ENCODE measurements at regions of chr12 and their contacts with region 1.

Region 1: DNA sequence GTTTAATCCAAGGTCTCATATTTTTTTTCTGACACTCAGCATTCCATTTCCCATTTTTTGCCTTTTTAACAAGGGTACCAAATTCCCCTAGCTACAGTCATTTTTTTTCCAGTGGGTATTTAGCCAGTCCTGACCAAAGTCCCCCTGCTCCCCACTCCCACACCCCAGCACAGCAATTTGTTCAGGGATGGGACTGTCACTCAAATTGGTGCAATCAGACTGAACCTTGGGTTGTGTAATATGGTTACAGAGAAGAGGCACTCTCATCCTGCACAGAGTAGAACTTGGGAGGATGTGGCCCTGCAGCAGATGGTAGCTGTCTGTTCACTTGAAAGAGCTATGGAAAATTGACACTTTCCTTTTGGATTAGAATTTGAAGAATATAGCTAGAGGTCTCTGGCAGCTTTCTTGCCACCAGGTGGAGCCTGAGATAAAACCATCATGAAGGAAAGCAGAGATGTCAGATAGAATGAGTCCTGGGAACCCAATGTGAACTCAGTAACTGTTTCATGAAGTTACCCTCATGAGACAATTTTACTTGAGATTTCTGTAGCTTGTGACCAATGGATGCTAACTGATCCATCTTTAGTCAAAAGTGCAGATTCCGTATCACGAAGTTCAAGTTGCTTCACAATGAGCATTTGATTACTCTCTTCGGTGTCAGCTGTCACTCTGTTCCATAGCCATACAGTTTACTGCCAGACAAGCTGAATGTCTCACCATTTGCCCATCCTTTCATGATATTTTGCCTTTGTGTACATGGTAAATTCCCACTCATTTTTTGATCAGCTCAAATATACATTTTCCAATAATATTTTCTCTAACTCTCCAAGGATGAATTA is 394.0 kb upstream of the SYT1 start:
- DNase-seq: peak; percentile 44
- ATAC-seq: peak; percentile 76
- H3K4me3 Mint-ChIP-seq: no peak overlapping the region
- H3K27ac Mint-ChIP-seq: no peak overlapping the region
- H3K4me1 Mint-ChIP-seq: peaks cover 5% of the 10 kb centered on the region
- H3K27me3 Mint-ChIP-seq: no peaks in the 10 kb centered on the region
- CTCF ChIP-seq: peak; percentile 31; the same call in 1 of the 2 replicates

Region 2: GRCh38 chr12:78181544-78182162 is 288.9 kb before region 1 on chr12:
- CTCF ChIA-PET with region 1: interaction called, 11 read pairs
- POLR2A ChIA-PET with region 1: no interaction called
- DNase-seq: peak; percentile 23
- ATAC-seq: peak; percentile 58; the same call in 1 of the 2 replicates
- H3K4me3 Mint-ChIP-seq: no peak overlapping the region
- H3K27ac Mint-ChIP-seq: no peak overlapping the region
- H3K4me1 Mint-ChIP-seq: peaks cover 12% of the 10 kb centered on the region
- H3K27me3 Mint-ChIP-seq: no peaks in the 10 kb centered on the region
- CTCF ChIP-seq: no peak; the same call in 1 of the 2 replicates

Region 3: DNA sequence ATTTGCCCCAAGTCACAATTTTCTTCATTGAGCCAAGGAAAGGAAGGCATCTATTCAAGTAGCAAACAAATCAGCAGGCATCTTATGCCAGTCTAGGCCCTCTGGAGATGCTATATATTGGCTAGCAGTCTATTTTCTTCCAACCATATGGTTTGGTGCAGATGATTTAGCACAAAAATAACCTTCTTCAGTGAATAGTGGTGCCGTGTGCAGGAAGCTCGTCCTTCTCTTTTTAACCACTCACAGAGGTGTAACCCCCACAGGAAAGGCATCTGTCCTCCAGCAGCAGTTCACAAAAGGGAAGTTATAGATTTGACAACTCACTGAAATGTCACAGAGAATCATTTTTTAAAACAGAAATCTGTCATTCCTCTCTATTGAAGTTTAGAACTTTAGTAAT is 51.7 kb before region 1 on chr12:
- CTCF ChIA-PET with region 1: no interaction called
- POLR2A ChIA-PET with region 1: no interaction called
- DNase-seq: no peak
- ATAC-seq: no peak
- H3K4me3 Mint-ChIP-seq: no peak overlapping the region
- H3K27ac Mint-ChIP-seq: no peak overlapping the region
- H3K4me1 Mint-ChIP-seq: peaks cover 5% of the 10 kb centered on the region
- H3K27me3 Mint-ChIP-seq: no peaks in the 10 kb centered on the region
- CTCF ChIP-seq: no peak

Region 4: DNA sequence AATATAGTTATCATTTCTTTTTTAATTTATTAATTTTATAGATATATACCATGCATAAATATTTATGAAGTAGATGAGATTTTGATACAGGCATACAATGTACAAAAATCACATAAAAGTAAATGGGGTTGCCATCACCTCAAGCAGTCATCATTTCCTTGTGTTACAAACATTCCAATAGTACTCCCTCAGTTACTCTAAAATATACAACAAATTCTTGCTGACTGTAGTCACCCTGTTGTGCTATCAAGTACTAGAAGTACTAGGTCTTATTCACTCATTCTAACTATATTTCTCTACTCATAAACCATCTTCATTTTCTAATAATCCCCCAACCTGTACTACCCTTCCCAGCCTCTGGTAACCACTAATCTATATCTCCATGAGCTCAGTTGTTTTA is 38.6 kb before region 1 on chr12:
- CTCF ChIA-PET with region 1: no interaction called
- POLR2A ChIA-PET with region 1: no interaction called
- DNase-seq: no peak
- ATAC-seq: no peak
- H3K4me3 Mint-ChIP-seq: no peak overlapping the region
- H3K27ac Mint-ChIP-seq: no peak overlapping the region
- H3K4me1 Mint-ChIP-seq: no peaks in the 10 kb centered on the region
- H3K27me3 Mint-ChIP-seq: no peaks in the 10 kb centered on the region
- CTCF ChIP-seq: no peak

Region 5: GRCh38 chr12:78490861-78491260 is 20.3 kb after region 1 on chr12:
- CTCF ChIA-PET with region 1: interaction called, 11 read pairs
- POLR2A ChIA-PET with region 1: no interaction called
- DNase-seq: no peak
- ATAC-seq: no peak
- H3K4me3 Mint-ChIP-seq: no peak overlapping the region
- H3K27ac Mint-ChIP-seq: no peak overlapping the region
- H3K4me1 Mint-ChIP-seq: no peaks in the 10 kb centered on the region
- H3K27me3 Mint-ChIP-seq: no peaks in the 10 kb centered on the region
- CTCF ChIP-seq: no peak

Region 6: GRCh38 chr12:78530100-78530765 is 59.7 kb after region 1 on chr12:
- CTCF ChIA-PET with region 1: interaction called, 10 read pairs
- POLR2A ChIA-PET with region 1: no interaction called
- DNase-seq: no peak
- ATAC-seq: peak; percentile 92
- H3K4me3 Mint-ChIP-seq: peak overlapping the region; percentile 27
- H3K27ac Mint-ChIP-seq: peak overlapping the region; percentile 93
- H3K4me1 Mint-ChIP-seq: peaks cover 39% of the 10 kb centered on the region
- H3K27me3 Mint-ChIP-seq: peaks cover 5% of the 10 kb centered on the region; the same call in 1 of the 2 replicates
- CTCF ChIP-seq: no peak

Region 7: GRCh38 chr12:78562368-78563205 is 92.0 kb after region 1 on chr12:
- CTCF ChIA-PET with region 1: interaction called, 14 read pairs
- POLR2A ChIA-PET with region 1: no interaction called
- DNase-seq: no peak
- ATAC-seq: peak; percentile 83
- H3K4me3 Mint-ChIP-seq: no peak overlapping the region
- H3K27ac Mint-ChIP-seq: no peak overlapping the region
- H3K4me1 Mint-ChIP-seq: peaks cover 17% of the 10 kb centered on the region
- H3K27me3 Mint-ChIP-seq: no peaks in the 10 kb centered on the region; the same call in 1 of the 2 replicates
- CTCF ChIP-seq: peak; percentile 27; the same call in 1 of the 2 replicates

Region 8: GRCh38 chr12:78584695-78585531 is 114.3 kb after region 1 on chr12:
- CTCF ChIA-PET with region 1: interaction called, 30 read pairs
- POLR2A ChIA-PET with region 1: no interaction called
- DNase-seq: peak; percentile 70
- ATAC-seq: peak; percentile 98
- H3K4me3 Mint-ChIP-seq: no peak overlapping the region
- H3K27ac Mint-ChIP-seq: no peak overlapping the region
- H3K4me1 Mint-ChIP-seq: no peaks in the 10 kb centered on the region
- H3K27me3 Mint-ChIP-seq: peaks cover 1% of the 10 kb centered on the region
- CTCF ChIP-seq: peak; percentile 39

Measured in WTC11 (cell line).